Ovary (tissue), 10 donors: ENCODE measurements at regions of chr11 and their contacts with region 1.

Region 1: GRCh38 chr11:26569646-26570045 is 2.4 kb downstream of the MUC15 start:
- DNase-seq: no peak
- H3K4me3 ChIP-seq: no peak overlapping the region
- H3K27ac ChIP-seq: no peak overlapping the region
- H3K4me1 ChIP-seq: no peaks in the 10 kb centered on the region
- H3K27me3 ChIP-seq: no peaks in the 10 kb centered on the region
- CTCF ChIP-seq: no peak
- EP300 ChIP-seq: no peak
- POLR2A ChIP-seq: no peak

Region 2: GRCh38 chr11:26580929-26581328 is 11.3 kb after region 1 on chr11:
- intact Hi-C with region 1: loop called in 1 of 4 experiments (anchors 1 kb)
- DNase-seq: no peak
- H3K4me3 ChIP-seq: no peak overlapping the region
- H3K27ac ChIP-seq: no peak overlapping the region
- H3K4me1 ChIP-seq: no peaks in the 10 kb centered on the region
- H3K27me3 ChIP-seq: no peaks in the 10 kb centered on the region
- CTCF ChIP-seq: no peak
- EP300 ChIP-seq: no peak
- POLR2A ChIP-seq: no peak

Region 3: DNA sequence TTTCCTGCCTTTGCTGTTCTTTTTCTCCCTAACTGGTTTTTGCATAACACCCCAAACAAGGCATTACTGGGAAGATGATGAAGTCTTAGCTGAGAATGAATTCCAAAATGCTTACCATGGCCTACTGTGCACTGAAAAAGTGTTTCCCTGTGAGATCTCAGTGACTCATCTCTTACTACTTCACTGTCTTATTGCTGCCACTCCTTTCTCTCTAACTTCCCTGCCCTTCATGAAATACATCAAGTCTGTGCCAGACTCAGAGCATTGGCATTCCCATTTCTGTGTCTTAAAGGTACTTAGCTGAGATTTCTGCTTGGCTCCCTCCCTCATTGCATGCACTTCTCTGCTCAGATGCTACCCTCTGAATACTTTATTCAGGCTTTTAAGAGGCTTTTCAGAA is 51.5 kb after region 1 on chr11:
- intact Hi-C with region 1: no loop called
- DNase-seq: no peak
- H3K4me3 ChIP-seq: no peak overlapping the region
- H3K27ac ChIP-seq: no peak overlapping the region
- H3K4me1 ChIP-seq: no peaks in the 10 kb centered on the region
- H3K27me3 ChIP-seq: no peaks in the 10 kb centered on the region
- CTCF ChIP-seq: no peak
- EP300 ChIP-seq: no peak
- POLR2A ChIP-seq: no peak